PC-3 (cell line): ENCODE measurements at regions of chr3 and their contacts with region 1.

Region 1: GRCh38 chr3:43855674-43856299 is 165.0 kb downstream of the ABHD5 start:
- DNase-seq: peak; percentile 82
- ATAC-seq: peak; percentile 73
- H3K4me3 ChIP-seq: no peak overlapping the region
- H3K27ac ChIP-seq: no peak overlapping the region
- H3K4me1 ChIP-seq: peaks cover 36% of the 10 kb centered on the region
- H3K27me3 ChIP-seq: no peaks in the 10 kb centered on the region
- CTCF ChIP-seq: peak; percentile 85

Region 2: GRCh38 chr3:43870120-43870519 is 14.3 kb after region 1 on chr3:
- CTCF ChIA-PET with region 1: interaction called, 7 read pairs
- POLR2A ChIA-PET with region 1: interaction called, 6 read pairs
- intact Hi-C with region 1: loop called (anchors 1 kb)
- DNase-seq: peak; percentile 93
- ATAC-seq: peak; percentile 52
- H3K4me3 ChIP-seq: no peak overlapping the region
- H3K27ac ChIP-seq: peak overlapping the region; percentile 97
- H3K4me1 ChIP-seq: peaks cover 95% of the 10 kb centered on the region
- H3K27me3 ChIP-seq: no peaks in the 10 kb centered on the region
- CTCF ChIP-seq: no peak

Region 3: GRCh38 chr3:44000586-44000985 is 144.8 kb after region 1 on chr3:
- CTCF ChIA-PET with region 1: no interaction called
- POLR2A ChIA-PET with region 1: no interaction called
- intact Hi-C with region 1: loop called (anchors 10 kb)
- DNase-seq: peak; percentile 70
- ATAC-seq: peak; percentile 94
- H3K4me3 ChIP-seq: peak overlapping the region; percentile 26; the same call in 1 of the 2 replicates
- H3K27ac ChIP-seq: peak overlapping the region; percentile 21
- H3K4me1 ChIP-seq: peaks cover 16% of the 10 kb centered on the region
- H3K27me3 ChIP-seq: no peaks in the 10 kb centered on the region
- CTCF ChIP-seq: no peak

Region 4: GRCh38 chr3:44065311-44066094 is 209.7 kb after region 1 on chr3:
- CTCF ChIA-PET with region 1: no interaction called
- POLR2A ChIA-PET with region 1: no interaction called
- intact Hi-C with region 1: loop called (anchors 5 kb)
- DNase-seq: peak; percentile 89
- ATAC-seq: peak; percentile 44
- H3K4me3 ChIP-seq: no peak overlapping the region
- H3K27ac ChIP-seq: no peak overlapping the region
- H3K4me1 ChIP-seq: peaks cover 28% of the 10 kb centered on the region
- H3K27me3 ChIP-seq: no peaks in the 10 kb centered on the region
- CTCF ChIP-seq: peak; percentile 27

Region 5: DNA sequence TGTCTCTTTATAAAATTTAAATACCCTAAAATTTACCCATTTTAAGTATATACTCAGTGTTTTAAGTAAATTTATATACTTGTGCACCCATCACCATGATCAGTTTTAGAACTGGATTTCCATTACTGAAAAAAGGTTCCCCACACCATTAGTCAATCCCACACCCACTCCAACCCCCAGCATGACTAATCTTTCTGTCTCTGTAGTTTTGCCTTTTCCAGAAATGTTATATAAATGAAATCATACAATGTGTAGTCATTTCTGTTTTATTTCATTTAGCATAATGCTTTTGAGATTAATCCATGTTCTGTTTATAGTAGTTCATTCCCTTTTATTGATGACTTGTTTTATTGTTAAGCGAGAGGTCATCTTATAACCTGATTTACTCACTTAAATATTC is 1672.6 kb after region 1 on chr3:
- CTCF ChIA-PET with region 1: no interaction called
- POLR2A ChIA-PET with region 1: no interaction called
- intact Hi-C with region 1: no loop called
- DNase-seq: peak; percentile 45
- ATAC-seq: peak; percentile 90
- H3K4me3 ChIP-seq: no peak overlapping the region
- H3K27ac ChIP-seq: peak overlapping the region; percentile 37; the same call in 1 of the 2 replicates
- H3K4me1 ChIP-seq: peaks cover 12% of the 10 kb centered on the region; the same call in 1 of the 2 replicates
- H3K27me3 ChIP-seq: no peaks in the 10 kb centered on the region
- CTCF ChIP-seq: no peak